Right ventricle myocardium inferior (tissue), 1 donor: ENCODE measurements at regions of chr21 and their contacts with region 1.

Region 1: GRCh38 chr21:42117229-42117966 is 46.3 kb downstream of the UMODL1 start:
- DNase-seq: peak; percentile 82
- ATAC-seq: peak; percentile 82

Region 2: DNA sequence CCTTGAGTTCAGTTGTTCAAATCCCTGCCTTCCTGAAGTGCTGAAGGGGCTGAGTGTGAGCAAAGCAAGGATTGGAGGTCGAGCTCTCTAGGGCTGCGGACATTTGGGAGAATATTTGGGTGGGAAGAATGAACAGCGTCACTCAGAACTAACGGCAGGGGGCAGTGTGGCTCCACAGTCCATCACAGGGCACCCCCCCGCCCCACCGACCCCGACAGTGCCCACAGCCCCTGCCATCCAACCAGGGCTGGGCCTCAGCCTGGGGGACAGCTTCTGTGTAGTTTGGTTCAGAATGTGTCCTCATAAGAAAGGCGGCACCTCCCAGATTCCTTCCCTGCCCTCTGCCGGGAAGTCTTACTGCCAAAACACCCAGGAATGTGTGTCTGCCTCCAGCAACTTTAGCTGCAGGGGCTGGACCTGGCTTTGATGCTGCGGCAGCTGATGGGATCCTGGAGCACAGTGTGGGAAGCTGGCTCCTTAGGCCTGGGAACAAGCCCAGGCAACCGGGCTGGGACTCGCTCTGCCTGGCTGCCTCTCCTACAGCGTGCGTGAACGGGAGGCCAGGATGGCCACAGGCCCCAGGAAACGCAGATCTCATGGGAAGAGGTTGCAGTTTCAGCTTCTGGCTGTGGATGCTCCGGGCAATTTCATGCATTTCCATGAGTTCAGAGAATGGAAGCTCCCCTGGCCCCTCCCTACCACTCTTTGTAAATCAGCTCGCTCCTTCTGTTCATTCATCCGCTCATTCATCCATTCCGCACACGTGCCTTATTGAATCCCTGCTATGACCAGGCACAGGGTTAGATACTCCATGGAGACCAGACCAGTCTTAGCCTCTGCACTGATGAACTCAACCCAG is 504.5 kb before region 1 on chr21:
- intact Hi-C with region 1: loop called (anchors 5 kb)
- DNase-seq: peak; percentile 85
- ATAC-seq: peak; percentile 96

Region 3: DNA sequence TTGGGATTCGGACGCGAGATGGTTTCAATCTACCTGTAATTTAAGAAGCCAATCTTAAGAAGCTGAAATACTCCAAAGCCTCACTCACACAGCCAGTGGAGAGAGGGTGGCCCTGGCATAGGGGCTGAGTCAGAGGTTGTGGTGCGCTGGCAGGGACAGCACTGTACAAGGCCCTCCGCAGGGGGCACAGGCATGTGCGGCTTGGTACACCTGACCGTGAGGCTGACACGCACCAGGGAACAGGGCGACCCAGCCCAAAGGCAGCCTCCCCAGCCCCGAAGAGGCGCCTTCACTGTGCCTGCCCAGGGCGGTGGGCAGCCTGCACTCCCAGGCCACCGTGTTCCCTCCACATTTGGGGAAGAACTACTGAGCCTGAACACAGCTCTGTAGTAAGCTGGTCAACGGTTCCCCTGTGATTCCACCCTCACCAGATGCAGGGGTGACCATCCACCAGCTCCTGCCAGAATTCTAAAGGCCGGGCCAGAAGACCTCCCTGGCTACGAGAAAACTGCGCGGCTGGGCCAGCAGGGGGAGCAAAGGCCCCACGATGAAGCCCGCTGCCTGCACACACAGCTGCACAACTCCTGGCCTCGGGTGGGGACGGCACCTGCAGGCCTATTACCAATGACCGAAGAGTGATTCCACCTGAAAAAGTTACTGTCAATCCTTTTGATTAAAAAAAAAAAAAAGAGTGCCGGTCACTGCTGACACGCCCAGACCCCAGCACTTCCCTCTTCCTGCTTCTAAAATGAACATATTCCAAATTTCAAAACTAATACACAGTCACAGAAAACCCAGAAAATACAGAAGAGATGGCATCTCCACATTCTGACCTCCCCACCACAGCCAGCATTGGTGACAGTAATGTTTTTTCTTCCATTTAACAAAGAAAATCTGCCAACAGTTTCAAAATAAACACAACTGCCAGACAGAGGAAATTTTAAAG is 300.9 kb before region 1 on chr21:
- intact Hi-C with region 1: loop called (anchors 1 kb)
- DNase-seq: no peak
- ATAC-seq: peak; percentile 75

Region 4: GRCh38 chr21:41933313-41934086 is 183.9 kb before region 1 on chr21:
- intact Hi-C with region 1: loop called (anchors 10 kb)
- DNase-seq: no peak
- ATAC-seq: peak; percentile 32

Region 5: GRCh38 chr21:42009831-42010523 is 107.4 kb before region 1 on chr21 and contains the start of gene ZBTB21:
- intact Hi-C with region 1: loop called (anchors 1 kb)
- DNase-seq: peak; percentile 99
- ATAC-seq: peak; percentile 98
- total RNA-seq, gene ZBTB21: 6.1 TPM

Region 6: DNA sequence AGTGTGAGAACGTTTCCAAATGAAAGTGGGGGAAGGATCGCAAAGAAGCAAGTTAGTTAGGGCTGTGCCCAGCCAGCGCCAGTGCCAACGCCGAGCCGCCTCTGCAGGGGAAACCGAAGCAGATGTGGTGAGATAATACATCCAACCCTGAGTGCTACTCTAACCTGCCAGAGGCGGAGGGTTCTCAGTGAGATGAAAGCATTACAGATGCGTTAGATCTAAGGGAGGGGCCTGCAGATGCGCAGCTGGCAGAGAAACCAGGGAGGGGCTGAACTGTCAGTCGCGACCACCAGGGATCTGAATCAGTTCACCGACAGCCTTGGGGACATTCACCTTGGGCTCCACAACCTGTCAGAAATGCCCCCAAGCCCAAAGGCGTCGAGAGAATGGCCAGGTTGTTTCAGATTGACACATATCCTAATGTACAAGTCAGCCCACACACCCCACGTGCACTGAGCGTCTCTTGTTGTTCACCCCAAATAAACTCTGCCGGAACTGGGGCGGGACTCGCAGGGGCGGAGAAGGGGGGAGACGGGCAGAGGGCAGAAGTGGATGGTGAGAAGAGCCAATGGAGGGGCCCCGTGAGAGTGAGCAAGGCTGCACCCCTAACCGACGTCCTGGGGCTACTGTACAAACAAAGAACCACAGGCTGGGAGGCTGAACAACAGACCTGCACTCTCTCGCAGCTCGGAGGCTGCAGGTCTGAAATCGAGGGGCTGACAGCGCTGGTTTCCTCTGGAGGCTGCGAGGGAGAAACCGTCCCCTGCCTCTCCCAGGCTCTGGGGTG is 55.0 kb before region 1 on chr21:
- intact Hi-C with region 1: no loop called
- DNase-seq: peak; percentile 65
- ATAC-seq: no peak

Region 7: DNA sequence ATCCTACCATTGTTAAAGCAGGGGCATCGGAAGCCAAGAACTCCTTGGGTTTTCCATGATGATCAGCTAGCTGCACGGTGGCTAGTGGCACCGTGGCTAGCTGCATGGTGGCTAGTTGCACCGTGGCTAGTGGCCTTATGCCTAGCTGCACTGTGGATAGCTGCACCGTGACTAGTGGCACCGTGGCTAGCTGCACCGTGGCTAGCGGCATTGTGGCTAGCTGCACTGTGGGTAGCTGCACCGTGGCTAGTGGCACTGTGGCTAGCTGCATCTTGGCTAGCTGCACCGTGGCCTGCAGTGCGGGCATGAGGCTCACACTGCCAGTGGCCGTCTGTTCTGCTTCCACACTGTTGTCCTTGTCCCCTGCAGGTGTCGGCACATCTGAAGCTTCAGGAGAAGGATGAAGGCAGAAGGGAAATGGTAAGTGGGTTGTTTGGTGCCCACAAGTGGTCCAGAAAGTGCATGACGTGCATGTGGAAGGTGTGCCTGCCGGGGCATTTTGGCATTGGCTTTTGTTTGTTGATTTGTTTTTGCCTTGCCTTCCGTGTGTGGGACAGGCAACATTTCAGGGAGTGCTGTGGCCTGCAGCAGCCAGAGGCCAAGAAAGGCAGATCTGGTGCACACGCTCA is 159.2 kb after region 1 on chr21:
- intact Hi-C with region 1: no loop called
- DNase-seq: no peak
- ATAC-seq: no peak

Region 8: DNA sequence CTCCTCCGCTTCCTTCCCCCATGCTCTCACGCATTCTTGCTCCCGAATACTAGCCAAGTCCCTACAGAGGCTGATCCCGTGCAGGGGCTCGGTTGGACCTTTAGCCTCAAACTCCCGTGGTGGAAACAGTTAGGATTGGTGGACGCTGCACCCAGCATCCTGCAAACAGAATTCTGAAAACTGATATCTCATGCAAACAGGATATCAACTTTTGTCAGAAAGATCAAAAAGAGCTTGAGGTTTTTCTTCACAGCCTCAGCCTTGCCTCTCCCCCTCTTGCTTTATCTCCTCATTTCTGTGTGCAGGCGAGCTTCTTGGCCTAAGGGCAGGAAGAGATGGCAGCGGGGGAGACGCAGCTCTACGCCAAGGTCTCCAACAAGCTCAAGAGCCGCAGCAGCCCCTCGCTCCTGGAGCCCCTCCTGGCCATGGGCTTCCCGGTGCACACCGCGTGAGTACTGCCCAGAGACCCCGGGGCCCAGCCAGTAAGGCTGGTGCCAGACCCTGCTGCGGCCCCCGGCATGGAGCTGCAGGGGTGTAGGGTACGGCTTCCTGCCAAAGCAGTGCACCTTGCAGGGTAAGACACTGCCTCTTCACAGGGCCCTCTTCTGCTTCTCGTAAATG is 286.3 kb after region 1 on chr21 and contains the start of gene UBASH3A:
- intact Hi-C with region 1: no loop called
- DNase-seq: no peak
- ATAC-seq: no peak
- total RNA-seq, gene UBASH3A: not detected